ENCODE measurements at regions of chr12 and their contacts with region 1.

Region 1: GRCh38 chr12:107448198-107448597 is 237.4 kb upstream of the PWP1 start:
- DNase-seq: peak in 6 of 7 donors; percentile 26 to 64 (median 51)
- H3K4me3 ChIP-seq: no peak overlapping the region
- H3K27ac ChIP-seq: no peak overlapping the region
- H3K4me1 ChIP-seq: no peaks in the 10 kb centered on the region
- H3K27me3 ChIP-seq: no peaks in the 10 kb centered on the region
- CTCF ChIP-seq: peak; percentile 32 to 59 (median 50)
- POLR2A ChIP-seq: no peak

Region 2: DNA sequence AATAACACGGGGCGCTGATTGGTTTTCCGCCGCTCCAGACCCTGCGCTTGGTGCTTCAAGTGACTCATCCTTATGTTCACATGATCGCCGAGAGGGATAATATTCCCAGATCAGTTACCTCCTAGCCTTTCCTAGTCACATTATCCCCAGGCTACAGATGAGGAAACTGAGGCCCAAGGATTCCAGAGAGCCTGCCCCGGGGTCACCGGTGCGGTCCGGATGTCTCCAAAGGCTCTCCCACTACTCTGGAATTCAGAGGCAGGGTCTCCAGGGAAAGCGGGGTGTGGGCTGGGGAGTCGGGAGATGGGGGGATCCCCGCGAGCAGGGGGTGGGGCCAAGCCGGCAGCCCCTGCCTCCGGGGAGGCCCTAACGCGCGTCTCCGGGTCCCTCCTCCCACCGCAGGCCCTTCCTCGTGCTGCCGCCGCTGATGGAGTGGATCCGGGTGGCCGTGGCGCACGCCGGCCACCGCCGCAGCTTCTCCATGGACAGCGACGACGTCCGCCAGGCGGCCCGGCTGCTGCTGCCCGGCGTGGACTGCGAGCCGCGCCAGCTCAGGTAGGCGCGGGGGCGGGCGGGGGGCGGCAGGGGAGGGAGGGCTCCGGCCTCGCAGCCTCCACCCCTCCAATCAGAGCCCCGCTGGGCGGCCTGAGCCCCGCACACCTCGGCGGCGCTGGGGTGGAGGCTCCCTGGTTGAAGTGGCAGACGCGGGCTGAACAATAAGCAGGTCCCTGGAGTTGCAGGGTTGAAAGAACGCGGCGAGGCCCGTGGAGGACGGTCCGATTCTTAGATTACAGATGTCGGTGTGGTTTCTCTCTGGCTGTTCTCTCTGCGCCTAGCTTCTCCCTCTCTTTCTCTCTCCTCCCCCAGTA is 132.8 kb after region 1 on chr12:
- intact Hi-C with region 1: loop called in 1 of 2 experiments (anchors 10 kb)
- DNase-seq: peak in 2 of 7 donors; percentile 6 to 18
- H3K4me3 ChIP-seq: peak overlapping the region in 1 of 4 donors; percentile 19
- H3K27ac ChIP-seq: no peak overlapping the region
- H3K4me1 ChIP-seq: peaks cover 0 to 5% of the 10 kb centered on the region in 2 donors
- H3K27me3 ChIP-seq: peaks cover 11% of the 10 kb centered on the region
- CTCF ChIP-seq: no peak
- POLR2A ChIP-seq: no peak

Measured in adrenal gland (tissue), 19 donors.